ENCODE measurements at regions of chr9 and their contacts with region 1.

Region 1: GRCh38 chr9:136118320-136119060 is at the start of gene TMEM250:
- H3K4me3 ChIP-seq: peak within 1 kb of the TSS; percentile 55
- H3K27ac ChIP-seq: peak within 1 kb of the TSS; percentile 97
- H3K4me1 ChIP-seq: 0 out of 2 replicates have a peak, but pooled peaks cover 2% of the 10 kb centered on the region
- CTCF ChIP-seq: peak; percentile 65

Region 2: DNA sequence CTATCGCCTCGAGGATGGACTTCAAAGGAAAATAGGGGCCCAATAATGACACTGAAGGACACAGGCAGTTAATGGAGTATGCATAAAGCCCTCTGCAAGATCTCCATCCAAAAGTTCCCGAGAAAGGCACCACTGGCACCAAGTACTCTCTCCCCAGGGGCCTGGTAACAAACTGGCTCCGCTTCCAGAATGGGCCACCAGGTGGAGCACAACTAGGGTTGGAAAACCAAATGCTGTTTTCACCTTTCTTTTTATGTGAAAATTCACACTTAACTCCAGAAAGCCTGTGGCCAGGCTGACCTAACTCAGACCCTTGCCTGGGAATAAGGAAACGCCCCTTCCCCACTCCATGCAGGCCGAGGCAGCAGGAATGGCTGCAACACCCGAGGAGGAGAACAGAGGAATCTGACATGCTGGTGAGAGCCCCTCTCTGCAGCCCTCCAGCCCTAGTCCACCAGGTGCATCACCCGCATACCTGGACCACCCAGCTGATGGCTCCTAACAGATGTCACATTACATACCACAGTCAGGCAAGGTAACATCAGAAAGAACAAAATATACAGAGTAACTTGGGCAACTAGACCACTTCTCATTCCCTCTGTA is 253.9 kb before region 1 on chr9:
- CTCF ChIA-PET with region 1: interaction called, 15 read pairs
- POLR2A ChIA-PET with region 1: no interaction called
- H3K4me3 ChIP-seq: no peak overlapping the region
- H3K27ac ChIP-seq: no peak overlapping the region
- H3K4me1 ChIP-seq: no peaks in the 10 kb centered on the region
- CTCF ChIP-seq: peak; percentile 54; the same call in 1 of the 2 replicates

Region 3: GRCh38 chr9:135973277-135974219 is 144.9 kb before region 1 on chr9:
- CTCF ChIA-PET with region 1: interaction called, 95 read pairs
- POLR2A ChIA-PET with region 1: interaction called, 3 read pairs
- H3K4me3 ChIP-seq: no peak overlapping the region
- H3K27ac ChIP-seq: no peak overlapping the region
- H3K4me1 ChIP-seq: no peaks in the 10 kb centered on the region
- CTCF ChIP-seq: no peak

Region 4: DNA sequence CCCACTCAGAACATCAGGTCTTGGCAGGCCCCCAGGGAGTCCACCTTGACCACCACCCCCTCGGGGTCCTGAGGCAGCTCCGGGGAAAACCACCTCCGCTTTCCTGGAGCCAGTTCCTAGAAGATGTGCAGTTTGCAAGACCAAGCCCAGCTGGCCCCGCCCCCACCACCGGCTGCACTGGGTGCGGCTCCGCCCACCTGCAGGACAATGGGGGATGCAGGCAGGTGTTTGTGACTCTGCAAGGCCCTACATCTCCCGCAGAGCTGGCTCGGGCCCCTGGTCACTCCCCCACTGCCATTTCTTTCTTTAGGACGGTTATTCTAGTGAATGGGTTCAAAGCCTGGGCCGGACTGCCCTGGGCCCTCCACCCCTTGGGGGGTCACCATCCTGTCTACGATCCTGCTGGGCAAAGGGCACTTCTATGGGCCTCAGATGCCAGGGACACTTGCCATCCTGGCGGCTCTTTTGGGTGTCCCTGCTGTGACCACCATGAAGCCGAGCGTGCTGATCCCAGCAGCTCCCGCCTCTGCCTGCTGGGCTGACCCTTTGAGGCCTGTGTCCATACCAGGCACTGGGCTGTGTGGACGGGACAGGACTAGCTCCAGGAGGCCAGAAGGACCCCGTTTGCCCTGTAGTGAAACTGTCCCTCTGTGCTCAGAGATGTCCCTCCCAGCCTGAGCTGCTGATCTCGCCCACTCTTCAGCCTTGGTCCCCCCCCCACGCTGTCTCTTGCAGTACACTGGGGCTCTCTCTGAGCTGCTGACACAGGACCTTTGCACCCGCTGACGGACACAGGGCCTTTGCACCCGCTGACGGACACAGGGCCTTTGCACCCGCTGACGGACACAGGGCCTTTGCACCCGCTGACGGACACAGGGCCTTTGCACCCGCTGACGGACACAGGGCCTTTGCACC is 17.5 kb before region 1 on chr9:
- CTCF ChIA-PET with region 1: interaction called, 14 read pairs
- POLR2A ChIA-PET with region 1: interaction called, 5 read pairs
- H3K4me3 ChIP-seq: no peak overlapping the region
- H3K27ac ChIP-seq: no peak overlapping the region
- H3K4me1 ChIP-seq: no peaks in the 10 kb centered on the region
- CTCF ChIP-seq: no peak

Measured in HEK293 (cell line).